GM10248 (cell line): ENCODE measurements at regions of chr12 and their contacts with region 1.

Region 1: GRCh38 chr12:54214553-54215406 is 26.0 kb upstream of the SMUG1 start:
- DNase-seq: peak; percentile 92
- CTCF ChIP-seq: peak; percentile 99

Region 2: GRCh38 chr12:53984901-53985709 is 229.7 kb before region 1 on chr12 and contains the start of gene HOXC10:
- CTCF ChIA-PET with region 1: interaction called, 36 read pairs
- POLR2A ChIA-PET with region 1: no interaction called
- DNase-seq: peak; percentile 87
- CTCF ChIP-seq: peak; percentile 71

Region 3: GRCh38 chr12:54032627-54033100 is 182.1 kb before region 1 on chr12 and contains the start of gene HOXC5:
- CTCF ChIA-PET with region 1: interaction called, 139 read pairs
- POLR2A ChIA-PET with region 1: no interaction called
- DNase-seq: peak; percentile 86
- CTCF ChIP-seq: peak; percentile 93

Region 4: GRCh38 chr12:54166567-54167499 is 47.9 kb before region 1 on chr12:
- CTCF ChIA-PET with region 1: no interaction called
- POLR2A ChIA-PET with region 1: no interaction called
- DNase-seq: no peak
- CTCF ChIP-seq: no peak

Region 5: DNA sequence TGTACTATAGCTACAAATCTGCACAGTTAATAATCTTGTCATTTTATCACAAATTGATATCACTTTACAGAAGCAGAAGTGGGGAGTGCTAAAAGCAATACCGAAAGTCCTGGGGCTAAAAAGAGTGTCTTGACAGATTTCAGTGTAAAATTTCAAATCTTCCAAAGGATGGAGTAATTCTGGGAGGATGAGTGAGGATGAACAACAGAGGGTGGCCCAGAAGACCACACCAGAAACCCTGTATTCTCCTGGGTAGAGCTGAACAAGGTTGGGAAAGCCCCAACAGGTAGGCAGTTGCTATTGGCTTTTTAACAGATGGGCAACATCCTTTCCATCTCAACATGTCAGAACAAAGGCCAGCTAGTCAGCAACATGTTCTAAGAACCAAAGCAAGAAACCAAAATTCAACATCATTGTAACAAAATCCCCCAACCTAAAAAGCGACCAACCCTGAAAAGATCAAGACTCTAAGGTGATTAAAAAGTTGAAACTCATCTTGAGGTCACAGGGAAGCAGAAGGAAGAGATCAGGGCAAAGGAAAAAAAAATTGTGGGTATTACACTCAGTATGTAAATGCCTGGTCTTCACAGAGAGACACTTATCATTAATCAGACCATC is 26.3 kb after region 1 on chr12:
- CTCF ChIA-PET with region 1: interaction called, 35 read pairs
- POLR2A ChIA-PET with region 1: no interaction called
- DNase-seq: no peak
- CTCF ChIP-seq: no peak

Region 6: GRCh38 chr12:54277823-54278276 is 63.1 kb after region 1 on chr12:
- CTCF ChIA-PET with region 1: no interaction called
- POLR2A ChIA-PET with region 1: no interaction called
- DNase-seq: no peak
- CTCF ChIP-seq: no peak

Region 7: GRCh38 chr12:54324617-54325441 is 110.0 kb after region 1 on chr12 and contains the start of gene COPZ1:
- CTCF ChIA-PET with region 1: interaction called, 13 read pairs
- POLR2A ChIA-PET with region 1: no interaction called
- DNase-seq: peak; percentile 92
- CTCF ChIP-seq: peak; percentile 72

Region 8: DNA sequence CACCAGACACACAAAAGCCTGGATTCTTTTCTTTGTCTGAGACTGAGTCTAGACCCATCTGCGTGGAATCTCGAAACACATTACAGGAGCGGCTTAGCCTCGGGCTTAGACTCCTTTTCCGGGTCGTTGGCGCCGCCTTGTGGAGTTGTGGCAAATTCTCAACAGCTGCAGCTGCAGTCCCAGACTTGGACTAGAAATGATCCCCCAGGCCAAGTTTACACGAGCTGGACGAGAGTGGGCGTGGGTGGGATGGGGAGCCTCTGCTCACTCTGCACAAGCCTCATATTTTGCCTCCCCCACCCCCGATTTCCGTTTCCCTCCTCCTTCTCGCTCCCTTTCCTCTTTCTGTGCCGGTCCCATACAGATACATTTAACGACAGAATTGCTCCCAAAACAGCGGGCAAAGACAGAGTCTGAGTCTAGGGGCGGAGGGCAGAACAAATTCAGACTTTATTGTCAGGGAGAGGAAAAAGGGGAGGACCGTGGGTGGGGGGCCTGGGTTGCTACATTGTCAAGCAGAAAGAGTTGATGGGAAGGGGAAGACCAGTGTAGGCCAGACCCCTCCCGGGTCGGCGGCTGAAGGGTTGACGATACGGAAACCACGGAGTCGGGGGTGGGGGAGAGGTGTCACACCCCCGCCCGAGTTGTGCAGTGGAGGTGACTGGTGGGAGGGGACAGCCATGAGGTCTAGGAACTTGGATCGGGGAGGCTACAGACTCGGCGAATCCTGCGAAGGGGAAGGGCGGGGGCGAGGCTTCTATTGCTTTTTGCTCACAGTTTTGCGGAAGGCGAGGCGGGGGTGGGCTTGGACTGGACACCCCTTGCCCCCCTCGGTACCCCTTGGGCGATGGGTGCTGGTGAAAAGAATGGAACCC is 154.2 kb after region 1 on chr12:
- CTCF ChIA-PET with region 1: interaction called, 60 read pairs
- POLR2A ChIA-PET with region 1: no interaction called
- DNase-seq: peak; percentile 82
- CTCF ChIP-seq: peak; percentile 96